K562 (cell line): ENCODE measurements at regions of chr19 and their contacts with region 1.

Region 1: GRCh38 chr19:13920940-13921761 is 15.2 kb downstream of the CC2D1A start:
- DNase-seq: peak; percentile 74 to 80 (median 78)
- ATAC-seq: peak; percentile 98
- H3K4me3 ChIP-seq: no peak overlapping the region
- H3K27ac ChIP-seq: peak overlapping the region; percentile 55
- H3K4me1 ChIP-seq: peaks cover 0 to 13% of the 10 kb centered on the region in 2 experiments; a peak in 1 of 5 replicates
- H3K27me3 ChIP-seq: no peaks in the 10 kb centered on the region; a peak in 1 of 5 replicates
- CTCF ChIP-seq: no peak
- EP300 ChIP-seq: no peak
- POLR2A ChIP-seq: no peak
- RAD21 ChIP-seq: no peak

Region 2: DNA sequence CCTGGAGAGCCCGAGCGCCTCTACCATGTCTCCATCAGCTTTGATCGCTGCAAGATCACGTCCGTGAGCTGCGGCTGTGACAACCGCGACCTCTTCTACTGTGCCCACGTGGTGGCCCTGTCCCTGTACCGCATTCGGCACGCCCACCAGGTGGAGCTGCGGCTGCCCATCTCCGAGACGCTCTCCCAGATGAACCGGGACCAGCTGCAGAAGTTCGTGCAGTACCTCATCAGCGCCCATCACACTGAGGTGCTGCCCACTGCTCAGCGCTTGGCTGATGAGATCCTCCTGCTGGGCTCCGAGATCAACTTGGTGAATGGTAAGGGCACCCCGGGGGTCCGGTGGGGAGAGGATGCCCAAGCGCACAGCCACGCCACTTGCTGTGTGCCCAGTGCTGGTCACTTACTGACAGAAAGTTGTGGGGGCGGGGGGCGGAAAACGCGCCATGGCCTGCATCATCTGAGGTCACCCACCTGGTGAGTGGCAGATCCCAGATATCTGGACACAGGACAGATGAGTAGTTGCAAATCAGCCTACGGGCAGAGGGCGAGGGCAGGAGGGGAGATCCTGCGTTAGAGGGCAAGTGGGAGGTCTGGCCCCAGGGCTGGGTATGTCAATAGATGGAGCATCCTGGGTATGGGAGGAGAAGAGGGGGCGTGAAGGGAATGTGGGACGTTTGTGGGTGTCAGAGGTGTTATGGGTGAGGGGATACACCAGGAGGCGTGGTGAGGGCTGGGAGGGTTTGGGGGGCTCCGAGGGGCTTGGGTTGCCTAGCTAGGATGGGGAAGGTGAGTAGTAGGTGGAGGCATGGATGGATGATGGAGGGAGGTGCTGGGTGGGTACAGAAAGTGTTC is 116.1 kb before region 1 on chr19:
- CTCF ChIA-PET with region 1: no interaction called
- POLR2A ChIA-PET with region 1: no interaction called
- in situ Hi-C with region 1: no loop called
- intact Hi-C with region 1: no loop called
- DNase-seq: peak in 3 of 4 experiments; percentile 35 to 48 (median 40)
- ATAC-seq: peak; percentile 68
- H3K4me3 ChIP-seq: no peak overlapping the region
- H3K27ac ChIP-seq: no peak overlapping the region
- H3K4me1 ChIP-seq: peaks cover 6 to 21% of the 10 kb centered on the region in 2 experiments; a peak in 4 of 5 replicates
- H3K27me3 ChIP-seq: no peaks in the 10 kb centered on the region
- CTCF ChIP-seq: peak; percentile 44 to 61 (median 45); a peak in 5 of 6 replicates
- EP300 ChIP-seq: no peak
- POLR2A ChIP-seq: no peak
- RAD21 ChIP-seq: peak in 1 of 2 experiments; percentile 19; a peak in 1 of 4 replicates

Region 3: GRCh38 chr19:13909430-13909829 is 11.7 kb before region 1 on chr19:
- CTCF ChIA-PET with region 1: no interaction called
- POLR2A ChIA-PET with region 1: interaction called, 13 read pairs
- in situ Hi-C with region 1: no loop called
- intact Hi-C with region 1: no loop called
- DNase-seq: no peak
- ATAC-seq: no peak
- H3K4me3 ChIP-seq: no peak overlapping the region
- H3K27ac ChIP-seq: no peak overlapping the region
- H3K4me1 ChIP-seq: peaks cover 10 to 28% of the 10 kb centered on the region in 2 experiments
- H3K27me3 ChIP-seq: no peaks in the 10 kb centered on the region
- CTCF ChIP-seq: no peak
- EP300 ChIP-seq: no peak
- POLR2A ChIP-seq: no peak
- RAD21 ChIP-seq: no peak

Region 4: DNA sequence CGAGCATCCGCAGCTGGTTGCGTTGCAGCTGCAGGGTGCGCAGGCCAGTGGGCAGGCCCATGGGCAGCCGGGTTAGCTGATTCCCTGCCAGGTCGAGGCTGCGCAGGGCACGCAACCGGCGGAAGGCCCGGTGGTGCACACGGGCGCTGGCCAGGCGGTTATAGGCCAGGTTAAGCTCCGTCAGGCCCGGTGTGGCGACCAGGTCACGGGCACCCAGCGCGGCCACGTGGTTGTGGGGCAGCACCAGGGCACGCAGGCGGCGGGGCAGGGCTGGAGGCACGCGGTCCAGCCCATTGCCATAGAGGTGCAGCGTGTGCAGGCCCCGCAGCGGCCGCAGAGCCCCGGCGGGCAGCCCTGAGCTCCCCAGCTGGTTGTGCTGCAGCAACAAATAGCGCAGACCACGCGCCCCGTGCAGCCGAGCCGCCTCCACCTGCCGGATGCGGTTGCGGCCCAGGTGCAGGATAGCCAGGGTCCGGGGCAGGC is 11.8 kb after region 1 on chr19:
- CTCF ChIA-PET with region 1: no interaction called
- POLR2A ChIA-PET with region 1: interaction called, 21 read pairs
- in situ Hi-C with region 1: no loop called
- intact Hi-C with region 1: no loop called
- DNase-seq: no peak
- ATAC-seq: no peak
- H3K4me3 ChIP-seq: no peak overlapping the region
- H3K27ac ChIP-seq: no peak overlapping the region
- H3K4me1 ChIP-seq: peaks cover 0 to 54% of the 10 kb centered on the region in 2 experiments; a peak in 4 of 5 replicates
- H3K27me3 ChIP-seq: peaks cover 0 to 3% of the 10 kb centered on the region in 2 experiments; a peak in 2 of 5 replicates
- CTCF ChIP-seq: no peak
- EP300 ChIP-seq: no peak
- POLR2A ChIP-seq: no peak
- RAD21 ChIP-seq: no peak

Region 5: GRCh38 chr19:14039181-14039580 is 118.0 kb after region 1 on chr19:
- CTCF ChIA-PET with region 1: no interaction called
- POLR2A ChIA-PET with region 1: no interaction called
- in situ Hi-C with region 1: no loop called
- intact Hi-C with region 1: no loop called
- DNase-seq: peak in 1 of 4 experiments; percentile 5
- ATAC-seq: no peak
- H3K4me3 ChIP-seq: no peak overlapping the region
- H3K27ac ChIP-seq: no peak overlapping the region; the same call in 2 of the 3 replicates
- H3K4me1 ChIP-seq: peaks cover 4 to 15% of the 10 kb centered on the region in 2 experiments; a peak in 2 of 5 replicates
- H3K27me3 ChIP-seq: no peaks in the 10 kb centered on the region
- CTCF ChIP-seq: no peak
- EP300 ChIP-seq: no peak
- POLR2A ChIP-seq: no peak
- RAD21 ChIP-seq: no peak